ENCODE measurements at regions of chr1 and their contacts with region 1.

Region 1: GRCh38 chr1:112466078-112466660 is 42.6 kb upstream of the WNT2B start:
- DNase-seq: peak; percentile 94
- ATAC-seq: peak; percentile 87
- H3K4me3 ChIP-seq: peak overlapping the region; percentile 62
- H3K27ac ChIP-seq: peak overlapping the region; percentile 18
- H3K4me1 ChIP-seq: peaks cover 21% of the 10 kb centered on the region
- H3K27me3 ChIP-seq: no peaks in the 10 kb centered on the region
- CTCF ChIP-seq: peak; percentile 88

Region 2: DNA sequence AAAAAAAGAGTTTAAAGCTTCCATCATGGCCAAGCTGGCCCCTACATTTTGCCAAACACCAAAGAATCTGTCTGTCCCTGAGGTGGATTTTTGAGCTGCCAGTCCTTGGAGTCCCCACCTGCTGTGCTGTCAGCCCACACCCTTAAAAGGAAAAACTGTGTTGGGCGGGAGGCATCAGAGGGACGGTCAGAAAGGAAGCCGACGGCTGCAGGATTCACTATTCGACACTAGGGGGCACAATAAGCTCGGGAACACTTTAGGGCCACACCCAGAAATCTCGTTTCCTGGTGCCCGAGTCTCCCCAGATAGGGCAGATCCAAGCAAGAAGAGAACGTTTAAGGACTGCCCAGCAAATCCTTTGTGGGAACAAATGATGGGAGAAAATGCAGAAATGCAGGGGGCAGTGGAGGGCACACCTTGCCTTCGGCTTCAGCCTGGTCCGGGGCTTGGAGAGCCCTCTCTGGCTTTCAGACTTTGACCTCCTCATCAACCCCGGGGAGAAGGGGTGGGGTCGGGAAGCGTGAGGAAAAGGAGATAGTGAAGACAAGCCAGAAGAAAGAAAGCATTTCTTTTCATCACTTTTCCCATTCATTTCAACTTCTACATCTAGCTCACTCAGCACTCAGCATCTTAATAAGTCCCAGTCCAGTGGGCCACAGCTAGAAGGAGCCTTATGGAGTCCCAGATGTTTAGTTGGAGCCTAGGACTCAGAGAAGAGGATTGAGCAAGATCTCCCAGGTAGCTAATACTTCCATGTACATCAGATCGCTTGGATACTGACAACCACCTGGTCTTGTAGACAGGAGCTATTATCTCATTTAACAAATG is 75.2 kb before region 1 on chr1:
- CTCF ChIA-PET with region 1: interaction called, 9 read pairs
- POLR2A ChIA-PET with region 1: no interaction called
- intact Hi-C with region 1: loop called (anchors 1 kb)
- DNase-seq: peak; percentile 98
- ATAC-seq: peak; percentile 58
- H3K4me3 ChIP-seq: peak overlapping the region; percentile 74
- H3K27ac ChIP-seq: peak overlapping the region; percentile 34
- H3K4me1 ChIP-seq: peaks cover 32% of the 10 kb centered on the region
- H3K27me3 ChIP-seq: no peaks in the 10 kb centered on the region
- CTCF ChIP-seq: peak; percentile 94

Region 3: GRCh38 chr1:112444269-112444668 is 21.9 kb before region 1 on chr1:
- CTCF ChIA-PET with region 1: no interaction called
- POLR2A ChIA-PET with region 1: no interaction called
- intact Hi-C with region 1: loop called (anchors 2 kb)
- DNase-seq: peak; percentile 44
- ATAC-seq: peak; percentile 97
- H3K4me3 ChIP-seq: no peak overlapping the region
- H3K27ac ChIP-seq: peak overlapping the region; percentile 29
- H3K4me1 ChIP-seq: peaks cover 7% of the 10 kb centered on the region
- H3K27me3 ChIP-seq: no peaks in the 10 kb centered on the region
- CTCF ChIP-seq: no peak

Region 4: DNA sequence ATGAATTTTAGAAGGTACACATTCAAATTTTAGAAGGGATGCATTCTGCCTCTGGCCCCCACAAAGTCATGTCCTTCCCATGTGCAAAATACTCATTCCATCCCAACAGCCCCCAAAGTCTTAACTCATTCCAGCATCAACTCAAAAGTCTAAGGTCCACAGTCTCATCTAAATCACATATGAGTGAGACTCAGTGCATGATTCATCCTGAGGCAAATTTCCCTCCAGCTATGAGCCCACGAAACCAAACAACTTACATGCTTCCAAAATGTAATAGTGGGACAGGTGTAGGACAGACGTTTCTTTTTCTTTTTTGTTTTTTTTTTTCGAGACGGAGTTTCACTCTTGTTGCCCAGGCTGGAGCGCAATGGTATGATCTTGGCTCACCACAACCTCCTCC is 30.1 kb after region 1 on chr1:
- CTCF ChIA-PET with region 1: no interaction called
- POLR2A ChIA-PET with region 1: no interaction called
- intact Hi-C with region 1: no loop called
- DNase-seq: peak; percentile 44
- ATAC-seq: no peak
- H3K4me3 ChIP-seq: no peak overlapping the region
- H3K27ac ChIP-seq: no peak overlapping the region
- H3K4me1 ChIP-seq: no peaks in the 10 kb centered on the region; the same call in 1 of the 2 replicates
- H3K27me3 ChIP-seq: no peaks in the 10 kb centered on the region
- CTCF ChIP-seq: no peak

Region 5: GRCh38 chr1:112544011-112544688 is 78.0 kb after region 1 on chr1:
- CTCF ChIA-PET with region 1: no interaction called
- POLR2A ChIA-PET with region 1: no interaction called
- intact Hi-C with region 1: no loop called
- DNase-seq: peak; percentile 91
- ATAC-seq: peak; percentile 91
- H3K4me3 ChIP-seq: peak overlapping the region; percentile 28; the same call in 1 of the 2 replicates
- H3K27ac ChIP-seq: peak overlapping the region; percentile 76
- H3K4me1 ChIP-seq: peaks cover 20% of the 10 kb centered on the region
- H3K27me3 ChIP-seq: no peaks in the 10 kb centered on the region
- CTCF ChIP-seq: no peak

Measured in PC-3 (cell line).